Heart left ventricle (tissue), 16 donors: ENCODE measurements at regions of chr2 and their contacts with region 1.

Region 1: GRCh38 chr2:54838585-54839035 is 115.1 kb downstream of the EML6 start:
- DNase-seq: peak in 4 of 5 donors; percentile 51 to 64 (median 60)
- ATAC-seq: peak; percentile 73 to 90 (median 80)
- H3K4me3 ChIP-seq: no peak overlapping the region
- H3K27ac ChIP-seq: no peak overlapping the region
- H3K4me1 ChIP-seq: peaks cover 0 to 3% (median 0%) of the 10 kb centered on the region in 12 donors
- H3K27me3 ChIP-seq: no peaks in the 10 kb centered on the region
- CTCF ChIP-seq: peak; percentile 79 to 96 (median 92)
- POLR2A ChIP-seq: no peak

Region 2: DNA sequence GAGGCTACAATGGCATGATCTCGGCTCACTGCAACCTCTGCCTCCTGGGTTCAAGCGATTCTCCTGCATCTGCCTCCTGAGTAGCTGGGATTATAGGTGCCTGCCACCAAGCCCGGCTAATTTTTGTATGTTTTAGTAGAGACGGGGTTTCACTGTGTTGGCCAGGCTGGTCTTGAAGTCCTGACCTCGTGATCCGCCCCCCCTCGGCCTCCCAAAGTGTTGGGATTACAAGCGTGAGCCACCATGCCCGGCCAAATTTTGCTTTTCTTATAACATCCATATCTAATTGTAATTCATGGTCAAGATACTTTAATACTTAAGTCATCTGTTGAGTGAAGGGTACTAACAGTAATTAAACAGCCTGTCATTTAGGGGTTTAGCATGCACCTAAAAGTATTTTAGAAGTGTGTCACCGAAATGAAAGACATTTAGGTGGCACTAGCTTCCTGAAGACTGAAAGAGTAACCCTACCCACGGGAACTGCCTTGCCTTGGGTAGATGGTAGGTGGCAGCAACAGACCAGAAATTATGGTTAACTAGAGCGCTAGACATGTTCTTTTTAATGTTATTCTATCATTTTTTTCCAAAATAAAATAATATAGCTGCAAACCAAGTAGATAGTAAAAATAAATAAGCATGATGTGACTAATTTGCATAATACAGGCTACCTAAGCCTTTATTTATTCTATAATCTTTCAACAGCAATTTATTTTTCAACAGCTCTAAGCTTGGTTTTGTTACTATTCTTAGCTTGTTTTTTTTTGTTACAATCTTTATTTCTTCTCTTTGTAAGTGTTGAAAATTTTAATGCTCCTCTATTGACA is 731.8 kb before region 1 on chr2:
- intact Hi-C with region 1: loop called in 9 of 10 experiments (anchors 2 to 10 kb)
- DNase-seq: no peak
- ATAC-seq: peak in 3 of 4 donors; percentile 59 to 80 (median 75)
- H3K4me3 ChIP-seq: no peak overlapping the region
- H3K27ac ChIP-seq: no peak overlapping the region
- H3K4me1 ChIP-seq: peaks cover 0 to 8% (median 5%) of the 10 kb centered on the region in 12 donors
- H3K27me3 ChIP-seq: no peaks in the 10 kb centered on the region
- CTCF ChIP-seq: peak; percentile 43 to 78 (median 62)
- POLR2A ChIP-seq: no peak

Region 3: GRCh38 chr2:54176577-54176976 is 662.0 kb before region 1 on chr2:
- intact Hi-C with region 1: loop called in 2 of 10 experiments (anchors 10 kb)
- DNase-seq: peak; percentile 48 to 65 (median 50)
- ATAC-seq: peak in 3 of 4 donors; percentile 80 to 87 (median 84)
- H3K4me3 ChIP-seq: no peak overlapping the region
- H3K27ac ChIP-seq: no peak overlapping the region
- H3K4me1 ChIP-seq: no peaks in the 10 kb centered on the region
- H3K27me3 ChIP-seq: no peaks in the 10 kb centered on the region
- CTCF ChIP-seq: peak; percentile 17 to 67 (median 50)
- POLR2A ChIP-seq: no peak

Region 4: GRCh38 chr2:54723131-54723995 is 115.2 kb before region 1 on chr2 and contains the start of gene EML6:
- intact Hi-C with region 1: loop called in 6 of 10 experiments (anchors 2 to 10 kb)
- DNase-seq: peak; percentile 98 to 99 (median 98)
- ATAC-seq: peak; percentile 100
- H3K4me3 ChIP-seq: peak within 1 kb of the TSS; percentile 45 to 89 (median 73)
- H3K27ac ChIP-seq: peak within 1 kb of the TSS in 11 of 12 donors; percentile 32 to 82 (median 76)
- H3K4me1 ChIP-seq: peaks cover 0 to 26% (median 9%) of the 10 kb centered on the region in 12 donors
- H3K27me3 ChIP-seq: peaks cover 0 to 18% (median 0%) of the 10 kb centered on the region in 9 donors
- CTCF ChIP-seq: peak in 7 of 12 donors; percentile 7 to 48 (median 24)
- POLR2A ChIP-seq: peak in 1 of 2 donors; percentile 82
- total RNA-seq, gene EML6: 0.08 to 1.2 (median 0.58) TPM

Region 5: DNA sequence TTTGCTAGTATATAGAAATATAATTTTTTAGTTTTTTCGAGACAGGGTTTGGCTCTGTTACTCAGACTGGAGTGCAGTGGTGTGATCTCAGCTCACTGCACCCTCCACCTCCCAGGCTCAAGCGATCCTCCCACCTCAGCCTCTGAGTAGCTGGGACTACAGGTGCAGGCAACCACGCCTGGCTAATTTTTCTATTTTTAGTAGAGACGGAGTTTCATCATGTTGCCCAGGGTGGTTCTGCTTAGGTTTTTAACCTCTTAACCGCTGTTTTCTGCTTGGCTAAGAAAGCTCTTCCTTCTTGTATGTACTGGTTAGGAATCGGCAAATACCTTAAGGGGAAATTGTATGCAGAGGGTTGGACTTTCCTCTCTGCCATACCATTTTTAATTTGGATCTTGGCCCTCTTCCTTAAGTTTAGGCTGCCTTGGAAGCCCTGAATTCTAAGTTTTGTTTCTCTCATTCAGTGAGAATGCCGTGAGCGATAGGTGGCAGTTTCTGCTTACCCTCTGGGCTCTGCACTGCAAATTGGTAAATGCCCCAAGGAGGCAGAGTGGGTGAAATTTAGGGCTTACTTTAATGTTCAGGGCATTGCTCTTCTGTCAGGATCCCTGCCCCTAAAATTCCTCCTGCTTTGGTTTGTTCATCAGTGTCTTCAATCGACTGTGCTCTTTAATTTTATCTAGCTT is 82.8 kb before region 1 on chr2:
- intact Hi-C with region 1: no loop called
- DNase-seq: no peak
- ATAC-seq: no peak
- H3K4me3 ChIP-seq: no peak overlapping the region
- H3K27ac ChIP-seq: no peak overlapping the region
- H3K4me1 ChIP-seq: no peaks in the 10 kb centered on the region
- H3K27me3 ChIP-seq: no peaks in the 10 kb centered on the region
- CTCF ChIP-seq: no peak
- POLR2A ChIP-seq: no peak

Region 6: GRCh38 chr2:54966165-54966832 is 127.7 kb after region 1 on chr2:
- intact Hi-C with region 1: no loop called
- DNase-seq: no peak
- ATAC-seq: peak in 3 of 4 donors; percentile 35 to 74 (median 35)
- H3K4me3 ChIP-seq: no peak overlapping the region
- H3K27ac ChIP-seq: peak overlapping the region in 3 of 12 donors; percentile 1 to 25 (median 18)
- H3K4me1 ChIP-seq: peaks cover 0 to 39% (median 24%) of the 10 kb centered on the region in 12 donors
- H3K27me3 ChIP-seq: peaks cover 0 to 6% (median 0%) of the 10 kb centered on the region in 9 donors
- CTCF ChIP-seq: no peak
- POLR2A ChIP-seq: no peak

Region 7: DNA sequence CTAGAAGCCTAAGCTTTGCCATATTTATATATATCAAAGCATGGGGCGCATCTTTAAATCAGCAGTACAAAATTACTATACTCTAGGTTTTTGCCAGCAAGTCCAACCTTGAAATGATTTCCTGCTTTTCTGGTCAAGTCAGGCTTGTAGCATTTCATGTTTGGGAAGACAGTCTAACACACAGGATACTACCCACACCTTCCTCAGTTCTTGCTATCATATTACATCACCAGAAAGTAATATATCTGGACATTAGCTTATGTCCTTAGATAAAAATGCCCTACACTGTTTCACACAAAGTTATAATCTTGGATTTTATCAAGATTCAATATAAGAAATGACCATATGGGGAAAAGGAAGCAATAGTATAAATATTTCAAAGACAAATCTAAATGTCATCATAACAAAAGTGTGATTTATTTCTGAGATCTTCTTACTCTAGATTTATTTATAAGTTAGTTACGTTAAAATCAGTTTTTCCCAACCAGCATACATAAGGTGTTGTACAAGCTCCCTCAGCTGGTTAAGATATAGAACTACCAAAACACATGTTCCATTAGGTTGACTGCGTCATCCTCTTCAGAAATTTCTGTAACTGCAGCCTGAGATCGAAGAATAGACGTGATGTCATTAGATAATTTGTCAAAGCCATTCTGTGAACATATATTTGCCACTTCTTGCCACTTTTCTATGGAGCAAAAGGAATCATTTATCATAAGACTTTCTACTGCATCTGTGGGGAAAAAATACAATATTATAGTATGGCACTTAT is 336.8 kb after region 1 on chr2:
- intact Hi-C with region 1: loop called in 1 of 10 experiments (anchors 10 kb)
- DNase-seq: no peak
- ATAC-seq: peak; percentile 55 to 83 (median 66)
- H3K4me3 ChIP-seq: no peak overlapping the region
- H3K27ac ChIP-seq: no peak overlapping the region
- H3K4me1 ChIP-seq: peaks cover 0 to 8% (median 0%) of the 10 kb centered on the region in 12 donors
- H3K27me3 ChIP-seq: no peaks in the 10 kb centered on the region
- CTCF ChIP-seq: peak; percentile 35 to 75 (median 64)
- POLR2A ChIP-seq: no peak